Activated T-helper 2 cell treated with anti-CD3 and anti-CD28 coated beads, Interferon-gamma antibody, Interleukin-2, Interleukin-4, amounts not matched to agents 10 μg/mL and 5 μg/mL and 100 μg/mL, durations not matched to agents 14 hours and 24 hours and 36 hours (primary cell): ENCODE measurements at regions of chr5 and their contacts with region 1.

Region 1: GRCh38 chr5:43602461-43603343 is at the start of gene NNT:
- DNase-seq: peak; percentile 75
- H3K4me3 Mint-ChIP-seq: peak within 1 kb of the TSS; percentile 87
- H3K27ac Mint-ChIP-seq: peak within 1 kb of the TSS; percentile 82
- H3K4me1 Mint-ChIP-seq: peaks cover 23% of the 10 kb centered on the region
- H3K27me3 Mint-ChIP-seq: no peaks in the 10 kb centered on the region
- total RNA-seq, gene NNT: 64.1 and 64.8 TPM in 2 replicates

Region 2: GRCh38 chr5:43396762-43397304 is 205.9 kb before region 1 on chr5:
- intact Hi-C with region 1: loop called (anchors 5 kb)
- DNase-seq: peak; percentile 64
- H3K4me3 Mint-ChIP-seq: peak overlapping the region; percentile 97
- H3K27ac Mint-ChIP-seq: peak overlapping the region; percentile 98
- H3K4me1 Mint-ChIP-seq: peaks cover 22% of the 10 kb centered on the region
- H3K27me3 Mint-ChIP-seq: no peaks in the 10 kb centered on the region

Region 3: GRCh38 chr5:43556857-43557542 is 45.7 kb before region 1 on chr5 and contains the start of gene PAIP1:
- intact Hi-C with region 1: loop called (anchors 1 kb)
- DNase-seq: peak; percentile 84
- H3K4me3 Mint-ChIP-seq: peak within 1 kb of the TSS; percentile 86
- H3K27ac Mint-ChIP-seq: peak within 1 kb of the TSS; percentile 90
- H3K4me1 Mint-ChIP-seq: peaks cover 8% of the 10 kb centered on the region
- H3K27me3 Mint-ChIP-seq: peaks cover 9% of the 10 kb centered on the region
- total RNA-seq, gene PAIP1: 56.8 and 58.0 TPM in 2 replicates

Region 4: GRCh38 chr5:43616535-43616934 is 13.8 kb after region 1 on chr5:
- intact Hi-C with region 1: no loop called
- DNase-seq: no peak
- H3K4me3 Mint-ChIP-seq: no peak overlapping the region
- H3K27ac Mint-ChIP-seq: no peak overlapping the region
- H3K4me1 Mint-ChIP-seq: peaks cover 8% of the 10 kb centered on the region
- H3K27me3 Mint-ChIP-seq: no peaks in the 10 kb centered on the region